Activated naive CD4-positive, alpha-beta T cell treated with anti-CD3 and anti-CD28 coated beads, Interleukin-2, amount 10 ng/mL, durations not matched to agents 7 days and 5 days (primary cell): ENCODE measurements at regions of chr2 and their contacts with region 1.

Region 1: DNA sequence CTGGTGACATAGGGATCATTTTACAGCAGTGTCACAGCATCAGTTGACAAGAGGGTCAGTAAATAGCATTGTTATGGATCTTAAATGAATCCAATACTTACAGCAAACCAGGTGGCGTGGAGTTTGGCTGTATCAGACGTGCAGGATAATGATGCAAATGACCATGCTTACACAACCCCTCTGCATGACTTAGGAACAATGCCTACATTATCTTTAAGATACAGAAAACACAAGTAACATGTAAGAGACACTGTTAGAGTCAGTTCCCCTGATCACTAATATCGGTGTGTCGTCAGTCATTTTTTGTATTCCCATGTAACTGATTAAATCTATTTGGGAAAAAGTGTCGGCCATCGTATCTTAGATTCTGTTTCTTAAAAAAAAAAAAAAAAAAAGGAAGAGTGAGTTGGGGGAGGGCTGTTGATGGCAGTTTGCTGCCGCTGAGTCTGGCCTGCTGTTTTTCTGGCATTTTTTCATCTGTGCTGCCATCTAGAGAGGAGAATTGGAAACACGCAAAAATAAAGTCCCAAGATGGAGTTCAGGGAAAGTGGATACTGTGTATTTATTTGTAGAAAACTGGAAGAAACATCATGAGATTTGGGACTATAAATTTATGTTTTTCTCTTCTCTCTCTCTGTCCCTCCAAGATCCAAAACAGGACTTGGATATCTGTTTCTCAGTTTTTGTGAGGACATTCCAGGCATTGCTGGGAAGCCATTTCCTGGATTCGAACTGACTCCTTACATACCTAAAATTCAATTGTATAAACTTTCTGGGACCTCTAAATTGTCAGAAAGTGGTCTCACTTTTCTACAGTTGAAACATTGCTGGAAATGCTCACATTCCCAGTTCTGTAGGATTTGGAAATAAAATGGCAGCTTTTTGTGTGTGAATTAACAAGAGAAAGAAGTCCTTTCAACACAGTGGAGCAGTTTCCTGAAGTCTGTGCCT is 60.3 kb upstream of the AGPS start:
- DNase-seq: peak; percentile 56
- H3K4me3 Mint-ChIP-seq: no peak overlapping the region
- H3K27ac Mint-ChIP-seq: no peak overlapping the region
- H3K4me1 Mint-ChIP-seq: peaks cover 23% of the 10 kb centered on the region
- H3K27me3 Mint-ChIP-seq: no peaks in the 10 kb centered on the region

Region 2: GRCh38 chr2:177058747-177059146 is 273.6 kb before region 1 on chr2:
- CTCF ChIA-PET with region 1: no interaction called
- DNase-seq: no peak
- H3K4me3 Mint-ChIP-seq: no peak overlapping the region
- H3K27ac Mint-ChIP-seq: no peak overlapping the region
- H3K4me1 Mint-ChIP-seq: peaks cover 3% of the 10 kb centered on the region
- H3K27me3 Mint-ChIP-seq: no peaks in the 10 kb centered on the region

Region 3: GRCh38 chr2:177148477-177149154 is 183.7 kb before region 1 on chr2:
- CTCF ChIA-PET with region 1: interaction called, 15 read pairs
- DNase-seq: peak; percentile 82
- H3K4me3 Mint-ChIP-seq: peak overlapping the region; percentile 70
- H3K27ac Mint-ChIP-seq: no peak overlapping the region
- H3K4me1 Mint-ChIP-seq: peaks cover 15% of the 10 kb centered on the region
- H3K27me3 Mint-ChIP-seq: peaks cover 31% of the 10 kb centered on the region

Region 4: GRCh38 chr2:177263451-177264208 is 68.7 kb before region 1 on chr2:
- CTCF ChIA-PET with region 1: interaction called, 11 read pairs
- DNase-seq: peak; percentile 96
- H3K4me3 Mint-ChIP-seq: peak overlapping the region; percentile 98
- H3K27ac Mint-ChIP-seq: peak overlapping the region; percentile 100
- H3K4me1 Mint-ChIP-seq: peaks cover 62% of the 10 kb centered on the region
- H3K27me3 Mint-ChIP-seq: peaks cover 3% of the 10 kb centered on the region

Region 5: GRCh38 chr2:177359836-177360595 is 27.7 kb after region 1 on chr2:
- CTCF ChIA-PET with region 1: no interaction called
- DNase-seq: no peak
- H3K4me3 Mint-ChIP-seq: no peak overlapping the region
- H3K27ac Mint-ChIP-seq: no peak overlapping the region
- H3K4me1 Mint-ChIP-seq: no peaks in the 10 kb centered on the region
- H3K27me3 Mint-ChIP-seq: no peaks in the 10 kb centered on the region

Region 6: DNA sequence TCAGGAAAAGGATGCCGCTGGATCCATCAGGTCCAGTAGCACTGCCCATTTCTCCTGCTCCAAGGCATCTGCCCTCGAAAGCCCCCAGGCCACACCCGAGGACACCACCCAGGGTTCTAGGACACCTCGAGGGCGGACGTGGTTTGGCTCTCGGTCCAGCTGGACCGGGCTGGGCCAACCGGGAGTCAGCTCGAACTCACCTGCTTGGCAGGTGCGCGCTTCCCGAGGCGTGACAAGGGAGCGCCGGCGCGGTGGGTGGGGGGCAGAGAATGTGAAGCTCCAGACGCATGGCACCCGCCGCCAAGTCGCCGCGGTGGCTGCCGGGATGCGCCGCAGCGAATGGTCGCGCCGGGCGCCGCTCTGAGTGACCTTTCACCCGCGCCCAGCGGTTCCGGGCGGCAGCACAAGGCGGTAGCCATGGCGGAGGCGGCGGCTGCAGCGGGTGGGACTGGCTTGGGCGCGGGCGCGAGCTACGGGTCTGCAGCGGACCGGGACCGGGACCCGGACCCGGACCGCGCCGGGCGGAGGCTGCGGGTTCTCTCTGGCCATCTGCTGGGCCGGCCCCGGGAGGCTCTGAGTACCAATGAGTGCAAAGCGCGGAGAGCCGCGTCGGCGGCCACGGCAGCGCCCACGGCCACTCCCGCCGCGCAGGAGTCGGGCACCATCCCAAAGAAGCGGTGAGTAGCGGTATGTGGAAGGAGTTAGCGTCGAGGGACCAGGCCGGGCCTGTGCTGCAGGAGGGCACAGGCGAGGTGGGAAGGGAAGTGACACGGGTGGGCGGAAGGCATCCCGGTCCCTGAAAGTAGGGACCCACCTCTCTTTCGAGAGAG is 60.3 kb after region 1 on chr2 and contains the start of gene AGPS:
- CTCF ChIA-PET with region 1: interaction called, 13 read pairs
- DNase-seq: peak; percentile 87
- H3K4me3 Mint-ChIP-seq: peak within 1 kb of the TSS; percentile 90
- H3K27ac Mint-ChIP-seq: peak within 1 kb of the TSS; percentile 90
- H3K4me1 Mint-ChIP-seq: peaks cover 52% of the 10 kb centered on the region
- H3K27me3 Mint-ChIP-seq: no peaks in the 10 kb centered on the region

Region 7: DNA sequence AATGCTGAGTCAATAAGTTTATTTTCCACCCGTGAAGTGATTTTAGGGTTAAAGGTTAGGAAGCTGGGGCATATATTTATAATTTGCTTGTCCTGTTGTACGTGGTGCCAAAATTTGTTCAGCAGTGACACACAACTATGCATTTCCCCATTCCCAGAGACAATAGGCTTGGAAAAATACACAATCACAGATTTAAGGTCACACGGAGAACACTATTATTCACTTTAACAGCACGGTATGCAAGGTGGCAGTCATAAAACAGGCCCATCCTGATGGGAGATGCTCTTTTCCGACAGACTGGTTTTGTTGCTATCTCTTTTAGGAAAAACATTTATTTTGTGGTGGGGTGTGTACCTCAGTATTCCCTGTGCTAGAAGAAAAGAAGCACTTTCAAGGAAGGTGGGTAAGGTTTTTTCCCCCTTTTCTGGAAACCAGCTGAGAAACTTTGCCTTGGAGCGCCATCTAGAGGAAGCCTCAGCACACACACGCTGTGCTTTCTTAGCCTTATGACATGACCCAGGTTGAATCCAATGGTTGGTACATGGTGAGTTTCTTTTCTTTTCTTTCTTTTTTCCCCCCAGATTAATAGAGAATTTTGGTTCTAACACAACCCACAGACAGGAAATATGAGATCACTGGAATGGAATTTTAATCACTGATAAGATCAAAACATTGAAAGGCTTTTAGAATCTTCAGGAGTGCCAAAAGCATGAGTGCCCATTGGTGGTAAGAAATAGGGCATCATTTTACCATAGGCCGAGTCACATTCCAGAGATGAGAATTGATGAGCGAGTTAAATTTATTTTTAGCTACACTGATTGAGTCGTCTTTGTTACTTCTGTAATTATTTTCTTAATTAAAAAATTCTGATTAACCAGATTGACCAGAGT is 392.3 kb after region 1 on chr2:
- CTCF ChIA-PET with region 1: interaction called, 26 read pairs
- DNase-seq: peak; percentile 67
- H3K4me3 Mint-ChIP-seq: no peak overlapping the region
- H3K27ac Mint-ChIP-seq: no peak overlapping the region
- H3K4me1 Mint-ChIP-seq: no peaks in the 10 kb centered on the region
- H3K27me3 Mint-ChIP-seq: peaks cover 21% of the 10 kb centered on the region